ENCODE measurements at regions of chr11 and their contacts with region 1.

Region 1: GRCh38 chr11:2196970-2197770 is 25.6 kb upstream of the TH start:
- DNase-seq: peak; percentile 87
- CTCF ChIP-seq: peak; percentile 94

Region 2: DNA sequence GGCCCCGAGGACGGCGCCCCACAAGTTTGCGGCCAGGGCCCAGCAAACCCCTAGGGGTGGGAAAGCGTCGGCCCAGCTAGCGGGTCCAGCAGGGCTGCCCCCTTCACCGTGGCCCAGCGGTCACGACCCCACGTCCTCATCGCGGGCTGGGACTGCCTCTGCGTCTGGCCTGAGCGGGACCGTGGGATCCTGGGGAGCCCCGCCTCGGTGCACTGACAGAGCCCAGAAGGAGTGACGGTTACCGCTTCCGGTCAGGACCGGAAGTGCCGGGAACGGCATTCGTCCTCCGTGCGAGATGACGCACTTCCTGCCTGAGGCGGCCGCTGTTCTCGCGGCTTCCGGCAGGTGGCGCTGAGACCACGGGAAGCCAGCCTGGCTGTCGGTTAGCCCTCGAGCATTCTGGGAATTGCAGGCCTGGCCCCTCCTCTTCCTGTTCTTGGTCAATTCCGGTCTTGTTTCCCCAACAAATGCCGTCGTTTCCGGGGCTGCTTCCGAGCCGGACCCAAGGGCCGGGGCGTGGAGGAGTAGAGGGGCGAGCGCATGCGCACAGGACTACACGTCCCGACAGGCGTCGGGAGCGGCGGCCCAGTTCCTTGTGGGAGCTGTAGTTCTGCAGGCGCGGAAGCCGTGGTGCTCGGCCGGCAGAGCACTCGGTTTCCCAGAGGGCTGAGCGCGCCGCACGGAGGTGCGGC is 203.0 kb after region 1 on chr11 and contains the start of gene TSSC4:
- in situ Hi-C with region 1: loop called (anchors 25 kb)
- DNase-seq: peak; percentile 100
- CTCF ChIP-seq: peak; percentile 100

Region 3: DNA sequence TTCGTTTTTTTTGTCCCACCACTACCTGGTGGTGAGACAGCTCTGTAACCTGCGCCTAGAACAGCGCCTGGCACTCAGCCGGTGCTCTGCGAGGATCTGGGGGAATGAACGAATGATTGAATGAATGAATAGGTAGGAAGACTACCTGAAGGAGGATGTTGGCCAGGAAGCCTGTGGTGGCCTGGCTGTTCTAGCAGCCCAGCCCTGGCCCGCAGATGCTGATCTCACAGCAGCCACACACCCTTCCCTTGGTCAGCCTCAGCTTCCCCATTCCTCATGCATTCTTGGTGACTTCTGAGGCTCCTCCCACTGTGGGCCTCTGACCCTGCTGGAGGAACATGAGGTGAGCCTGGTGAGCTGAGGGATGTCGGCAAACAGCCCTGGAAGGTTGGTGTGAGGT is 243.5 kb after region 1 on chr11:
- in situ Hi-C with region 1: no loop called
- DNase-seq: no peak
- CTCF ChIP-seq: no peak

Region 4: DNA sequence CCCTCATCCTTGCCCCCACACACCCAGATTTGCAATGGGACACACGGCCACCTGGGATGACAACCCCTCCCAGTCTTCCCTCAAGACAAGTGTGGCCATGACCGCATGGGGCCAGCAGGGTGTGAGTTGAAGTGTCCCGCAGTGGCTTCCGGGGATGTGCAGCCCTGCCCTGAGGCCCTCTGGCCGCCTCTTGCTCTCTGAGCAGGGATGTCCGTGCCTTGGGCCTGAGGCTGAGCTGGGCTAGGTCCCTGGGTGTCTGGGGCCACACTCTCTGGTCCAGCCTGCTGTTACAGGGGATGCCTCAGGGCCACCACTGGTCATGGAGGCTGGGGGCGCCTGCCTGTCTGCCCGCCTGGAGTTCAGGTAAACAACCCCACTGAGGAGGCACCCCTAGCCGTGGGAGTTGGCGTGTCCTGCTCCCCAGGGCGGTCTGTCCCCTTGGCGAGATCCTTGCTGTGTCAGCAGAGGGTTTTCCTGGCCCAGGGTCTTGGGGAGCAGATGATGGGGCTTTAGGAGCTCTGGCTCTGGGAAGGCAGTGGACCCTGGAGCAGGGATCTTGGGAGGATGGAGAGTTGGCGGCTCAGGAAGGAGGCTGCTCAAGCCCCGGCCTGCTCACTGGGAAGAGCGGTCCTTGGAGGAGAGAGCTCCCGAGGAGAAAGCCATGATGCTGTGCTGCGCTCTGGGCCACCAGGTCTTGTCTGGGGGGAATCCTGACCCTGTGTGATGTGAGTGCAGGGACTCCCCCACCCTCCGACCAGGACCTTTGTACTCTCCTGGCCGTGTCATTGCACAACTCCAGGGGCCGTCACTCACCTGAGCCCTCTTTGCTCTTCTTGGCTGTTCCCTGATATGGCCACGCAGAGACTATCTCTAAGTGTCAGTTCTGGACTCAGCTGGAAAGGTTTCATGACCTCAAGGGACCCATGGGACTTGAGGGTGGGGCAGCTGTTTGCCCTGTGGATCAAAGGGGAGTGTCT is 315.5 kb after region 1 on chr11:
- in situ Hi-C with region 1: no loop called
- DNase-seq: peak; percentile 15
- CTCF ChIP-seq: no peak

Measured in GM13977 (cell line).